Heart left ventricle (tissue), 16 donors: ENCODE measurements at regions of chr12 and their contacts with region 1.

Region 1: DNA sequence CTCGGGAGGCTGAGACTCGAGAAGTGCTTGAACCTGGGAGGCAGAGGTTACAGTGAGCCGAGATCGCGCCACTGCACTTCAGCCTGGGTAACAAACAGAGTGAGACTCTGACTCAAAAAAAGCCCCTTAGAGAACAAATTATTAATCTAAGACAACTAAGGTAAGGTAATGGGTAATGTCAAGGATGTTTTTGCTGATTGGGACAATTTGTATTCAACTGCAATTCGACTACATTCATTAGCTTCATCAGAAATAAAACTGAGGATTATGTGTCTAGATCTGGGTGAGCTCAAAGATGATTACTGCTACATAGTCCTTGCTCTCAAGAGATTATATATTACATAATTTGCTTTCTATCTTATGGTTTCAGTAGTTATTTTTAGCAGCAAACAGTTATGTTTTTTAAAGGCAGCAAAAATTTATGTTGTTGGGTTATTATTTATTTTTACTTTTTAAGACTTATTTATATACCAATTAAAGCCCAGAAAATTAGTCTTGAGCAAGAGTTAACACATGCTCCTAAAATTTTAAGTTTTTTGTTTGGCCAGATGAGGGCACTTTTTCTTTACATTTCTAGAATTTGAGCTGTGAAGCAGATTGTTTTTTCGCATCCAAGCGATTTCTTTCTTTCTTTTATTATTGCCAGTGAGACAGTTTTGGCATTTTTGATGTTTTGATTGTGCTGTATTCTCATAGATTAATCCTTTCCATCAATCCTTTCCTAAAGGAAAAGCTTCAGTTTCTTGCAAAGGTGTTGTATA is 52.3 kb downstream of the PLEKHA5 start:
- DNase-seq: no peak
- ATAC-seq: no peak
- H3K4me3 ChIP-seq: no peak overlapping the region
- H3K27ac ChIP-seq: peak overlapping the region in 9 of 12 donors; percentile 1 to 64 (median 53)
- H3K4me1 ChIP-seq: peaks cover 0 to 49% (median 20%) of the 10 kb centered on the region in 12 donors
- H3K27me3 ChIP-seq: no peaks in the 10 kb centered on the region
- CTCF ChIP-seq: peak in 5 of 12 donors; percentile 10 to 26 (median 13)
- POLR2A ChIP-seq: no peak

Region 2: DNA sequence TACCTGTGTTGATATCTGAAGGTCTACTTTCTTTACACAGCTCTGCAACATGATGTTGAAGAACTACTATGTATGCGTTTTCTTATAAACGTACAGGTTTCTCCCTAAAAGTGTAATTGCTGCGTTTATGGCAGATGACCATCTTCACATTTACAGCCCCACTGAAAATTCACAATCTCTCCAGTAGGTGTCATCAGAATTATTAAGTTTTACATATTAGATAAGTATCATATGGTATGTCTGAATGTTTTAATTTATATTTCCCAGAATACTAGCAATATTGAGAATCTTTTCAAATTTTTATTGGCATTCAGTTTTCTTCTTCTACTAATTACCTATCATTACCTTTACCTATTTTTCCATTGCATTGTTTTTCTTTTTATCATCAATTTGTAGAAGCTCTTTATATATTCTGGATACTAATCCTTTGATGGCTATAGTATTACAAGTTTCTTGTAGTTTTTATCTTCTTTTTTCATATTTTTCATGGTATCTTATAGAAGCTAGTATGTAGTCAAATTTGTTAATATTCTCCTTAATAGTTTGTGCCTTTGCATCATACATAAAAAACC is 320.5 kb before region 1 on chr12:
- intact Hi-C with region 1: loop called in 8 of 10 experiments (anchors 5 to 10 kb)
- DNase-seq: no peak
- ATAC-seq: no peak
- H3K4me3 ChIP-seq: no peak overlapping the region
- H3K27ac ChIP-seq: no peak overlapping the region
- H3K4me1 ChIP-seq: peaks cover 0 to 7% (median 0%) of the 10 kb centered on the region in 12 donors
- H3K27me3 ChIP-seq: no peaks in the 10 kb centered on the region
- CTCF ChIP-seq: peak; percentile 29 to 57 (median 48)
- POLR2A ChIP-seq: no peak

Region 3: DNA sequence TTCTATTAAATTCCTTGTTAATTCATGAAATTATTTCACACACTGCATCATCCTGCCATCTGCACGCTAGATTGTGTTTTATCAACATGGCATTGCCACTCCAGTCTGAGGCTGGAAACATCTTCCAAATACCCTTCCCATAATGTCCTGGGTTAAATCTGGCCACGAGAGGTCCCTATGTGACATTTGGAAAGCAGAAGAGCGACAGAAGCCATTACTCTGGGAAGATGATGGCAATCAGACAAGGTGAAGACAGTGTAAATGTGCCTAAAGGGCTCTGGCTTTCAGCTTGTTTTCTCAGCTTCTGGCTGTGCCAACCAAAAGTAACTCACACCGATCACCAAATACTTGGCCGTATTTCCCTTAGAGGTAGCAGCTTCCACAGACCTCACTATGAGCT is 299.2 kb before region 1 on chr12:
- intact Hi-C with region 1: loop called in 2 of 10 experiments (anchors 5 kb)
- DNase-seq: no peak
- ATAC-seq: peak in 1 of 4 donors; percentile 67
- H3K4me3 ChIP-seq: peak overlapping the region in 1 of 12 donors; percentile 11
- H3K27ac ChIP-seq: no peak overlapping the region
- H3K4me1 ChIP-seq: peaks cover 0 to 5% (median 0%) of the 10 kb centered on the region in 12 donors
- H3K27me3 ChIP-seq: no peaks in the 10 kb centered on the region
- CTCF ChIP-seq: peak in 3 of 12 donors; percentile 14 to 29 (median 24)
- POLR2A ChIP-seq: no peak

Region 4: GRCh38 chr12:19031032-19031431 is 150.8 kb before region 1 on chr12:
- intact Hi-C with region 1: loop called in 4 of 10 experiments (anchors 5 to 10 kb)
- DNase-seq: no peak
- ATAC-seq: peak; percentile 16 to 61 (median 60)
- H3K4me3 ChIP-seq: no peak overlapping the region
- H3K27ac ChIP-seq: peak overlapping the region in 2 of 12 donors; percentile 11 to 25
- H3K4me1 ChIP-seq: peaks cover 0 to 21% (median 5%) of the 10 kb centered on the region in 12 donors
- H3K27me3 ChIP-seq: no peaks in the 10 kb centered on the region
- CTCF ChIP-seq: no peak
- POLR2A ChIP-seq: no peak

Region 5: GRCh38 chr12:19120795-19121194 is 61.1 kb before region 1 on chr12:
- intact Hi-C with region 1: no loop called
- DNase-seq: no peak
- ATAC-seq: no peak
- H3K4me3 ChIP-seq: no peak overlapping the region
- H3K27ac ChIP-seq: no peak overlapping the region
- H3K4me1 ChIP-seq: peaks cover 0 to 6% (median 0%) of the 10 kb centered on the region in 12 donors
- H3K27me3 ChIP-seq: no peaks in the 10 kb centered on the region
- CTCF ChIP-seq: no peak
- POLR2A ChIP-seq: no peak

Region 6: GRCh38 chr12:19138551-19138950 is 43.3 kb before region 1 on chr12:
- intact Hi-C with region 1: loop called in 5 of 10 experiments (anchors 5 to 10 kb)
- DNase-seq: no peak
- ATAC-seq: peak in 1 of 4 donors; percentile 29
- H3K4me3 ChIP-seq: no peak overlapping the region
- H3K27ac ChIP-seq: no peak overlapping the region
- H3K4me1 ChIP-seq: peaks cover 0 to 54% (median 28%) of the 10 kb centered on the region in 12 donors
- H3K27me3 ChIP-seq: no peaks in the 10 kb centered on the region
- CTCF ChIP-seq: no peak
- POLR2A ChIP-seq: no peak

Region 7: GRCh38 chr12:19517583-19517982 is 335.7 kb after region 1 on chr12:
- intact Hi-C with region 1: no loop called
- DNase-seq: no peak
- ATAC-seq: no peak
- H3K4me3 ChIP-seq: no peak overlapping the region
- H3K27ac ChIP-seq: no peak overlapping the region
- H3K4me1 ChIP-seq: peaks cover 0 to 15% (median 0%) of the 10 kb centered on the region in 12 donors
- H3K27me3 ChIP-seq: no peaks in the 10 kb centered on the region
- CTCF ChIP-seq: no peak
- POLR2A ChIP-seq: no peak